Thyroid gland (tissue), 4 donors: ENCODE measurements at regions of chr6 and their contacts with region 1.

Region 1: DNA sequence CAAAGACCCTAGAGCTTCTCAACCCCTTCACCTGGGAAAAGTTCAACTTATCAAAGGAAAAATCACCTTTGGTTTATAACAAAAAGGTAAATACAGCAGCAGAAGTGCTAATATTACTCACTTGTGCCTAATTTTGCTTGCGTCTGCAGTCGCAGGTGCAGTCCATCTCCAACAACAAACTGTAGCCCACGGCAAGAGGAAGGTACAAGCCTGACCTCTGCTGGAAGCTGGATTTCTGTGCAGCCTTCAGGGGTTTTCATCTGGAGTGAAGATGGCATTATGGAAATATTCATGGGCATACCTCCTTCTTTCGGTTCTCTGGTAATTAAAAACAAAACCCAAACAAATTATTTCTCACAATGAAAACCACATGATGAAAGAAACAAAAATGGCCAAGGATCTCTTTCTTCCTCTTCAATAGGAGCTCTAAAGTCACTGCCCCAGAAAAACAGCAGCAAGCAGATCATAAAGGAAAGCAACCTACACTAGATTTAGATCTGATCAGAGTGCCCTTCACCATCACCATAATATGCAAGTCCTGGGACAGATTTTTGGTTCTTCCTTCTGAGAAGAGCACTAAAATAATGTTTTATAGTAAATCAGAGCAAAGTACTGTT is 7.8 kb downstream of the UBE3D start:
- DNase-seq: peak; percentile 14 to 32
- H3K4me3 ChIP-seq: no peak overlapping the region
- H3K27ac ChIP-seq: no peak overlapping the region
- H3K4me1 ChIP-seq: no peaks in the 10 kb centered on the region
- H3K27me3 ChIP-seq: no peaks in the 10 kb centered on the region
- CTCF ChIP-seq: peak in 5 of 6 experiments; percentile 11 to 67 (median 42)
- POLR2A ChIP-seq: no peak

Region 2: GRCh38 chr6:82251942-82252341 is 805.9 kb before region 1 on chr6:
- intact Hi-C with region 1: loop called (anchors 10 kb)
- DNase-seq: no peak
- H3K4me3 ChIP-seq: no peak overlapping the region
- H3K27ac ChIP-seq: no peak overlapping the region
- H3K4me1 ChIP-seq: peaks cover 0 to 9% of the 10 kb centered on the region in 2 donors
- H3K27me3 ChIP-seq: no peaks in the 10 kb centered on the region
- CTCF ChIP-seq: peak in 5 of 6 experiments; percentile 15 to 50 (median 42)
- POLR2A ChIP-seq: no peak